HCT116 (cell line): ENCODE measurements at regions of chr17 and their contacts with region 1.

Region 1: GRCh38 chr17:14886240-14886639 is 378.9 kb downstream of the PMP22 start:
- DNase-seq: no peak
- ATAC-seq: peak; percentile 62; the same call in 1 of the 2 replicates
- H3K4me3 ChIP-seq: no peak overlapping the region
- H3K27ac ChIP-seq: no peak overlapping the region
- H3K4me1 ChIP-seq: no peaks in the 10 kb centered on the region
- H3K27me3 ChIP-seq: no peaks in the 10 kb centered on the region
- CTCF ChIP-seq: peak in 2 of 3 experiments; percentile 48 to 50; a peak in 4 of 6 replicates
- POLR2A ChIP-seq: no peak
- RAD21 ChIP-seq: peak; percentile 34; the same call in 1 of the 2 replicates

Region 2: DNA sequence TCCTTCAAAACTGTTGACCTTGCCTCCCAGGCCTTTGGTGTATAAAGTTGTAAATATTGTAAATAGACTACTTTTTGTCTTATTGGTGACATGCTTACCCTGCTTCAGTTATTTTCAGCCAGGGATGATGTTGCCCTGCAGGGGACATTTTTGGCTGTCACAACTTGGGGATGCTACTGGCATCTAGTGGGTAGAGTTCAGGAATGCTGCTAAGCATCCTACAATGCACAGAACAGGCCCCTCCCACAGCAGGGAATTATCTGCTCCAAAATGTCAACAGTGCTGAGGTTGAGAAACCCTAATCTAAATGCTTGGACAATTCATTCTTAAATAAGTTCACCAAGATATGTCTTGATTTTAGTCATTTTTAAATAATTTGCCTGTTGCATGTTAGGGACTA is 80.9 kb before region 1 on chr17:
- CTCF ChIA-PET with region 1: no interaction called
- POLR2A ChIA-PET with region 1: no interaction called
- RAD21 ChIA-PET with region 1: no interaction called
- intact Hi-C with region 1: no loop called
- DNase-seq: no peak
- ATAC-seq: no peak
- H3K4me3 ChIP-seq: no peak overlapping the region
- H3K27ac ChIP-seq: no peak overlapping the region
- H3K4me1 ChIP-seq: no peaks in the 10 kb centered on the region
- H3K27me3 ChIP-seq: no peaks in the 10 kb centered on the region
- CTCF ChIP-seq: no peak
- POLR2A ChIP-seq: no peak
- RAD21 ChIP-seq: no peak

Region 3: GRCh38 chr17:14959106-14959648 is 72.9 kb after region 1 on chr17:
- CTCF ChIA-PET with region 1: no interaction called
- POLR2A ChIA-PET with region 1: no interaction called
- RAD21 ChIA-PET with region 1: no interaction called
- intact Hi-C with region 1: no loop called
- DNase-seq: no peak
- ATAC-seq: no peak
- H3K4me3 ChIP-seq: no peak overlapping the region
- H3K27ac ChIP-seq: no peak overlapping the region
- H3K4me1 ChIP-seq: no peaks in the 10 kb centered on the region
- H3K27me3 ChIP-seq: peaks cover 4% of the 10 kb centered on the region; the same call in 1 of the 2 replicates
- CTCF ChIP-seq: no peak
- POLR2A ChIP-seq: no peak
- RAD21 ChIP-seq: no peak

Region 4: DNA sequence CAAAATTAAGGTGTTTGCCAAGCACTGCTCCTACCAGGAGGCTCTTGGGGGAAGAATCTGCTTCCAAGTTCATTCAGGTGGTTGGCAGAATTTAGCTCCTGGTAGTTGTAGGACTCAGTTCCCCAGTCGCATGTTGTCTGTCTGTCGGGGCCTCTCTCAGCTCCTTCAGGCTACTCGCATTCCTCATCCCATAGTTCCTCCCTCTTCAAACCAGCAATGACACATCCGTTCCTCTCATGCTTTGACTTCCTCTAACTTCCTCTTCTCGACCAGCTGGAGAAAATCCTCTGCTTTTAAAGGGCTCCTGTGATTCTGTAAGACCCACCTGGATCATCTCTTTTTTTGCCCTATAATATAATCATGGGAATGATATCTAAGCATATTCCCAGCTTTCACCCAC is 270.8 kb after region 1 on chr17:
- CTCF ChIA-PET with region 1: interaction called, 14 read pairs
- POLR2A ChIA-PET with region 1: no interaction called
- RAD21 ChIA-PET with region 1: no interaction called
- intact Hi-C with region 1: no loop called
- DNase-seq: no peak
- ATAC-seq: no peak
- H3K4me3 ChIP-seq: no peak overlapping the region
- H3K27ac ChIP-seq: no peak overlapping the region
- H3K4me1 ChIP-seq: no peaks in the 10 kb centered on the region
- H3K27me3 ChIP-seq: peaks cover 23% of the 10 kb centered on the region
- CTCF ChIP-seq: no peak
- POLR2A ChIP-seq: no peak
- RAD21 ChIP-seq: no peak